Activated CD4-positive, alpha-beta T cell treated with anti-CD3 and anti-CD28 coated beads for 36 hours (primary cell): ENCODE measurements at regions of chr17 and their contacts with region 1.

Region 1: DNA sequence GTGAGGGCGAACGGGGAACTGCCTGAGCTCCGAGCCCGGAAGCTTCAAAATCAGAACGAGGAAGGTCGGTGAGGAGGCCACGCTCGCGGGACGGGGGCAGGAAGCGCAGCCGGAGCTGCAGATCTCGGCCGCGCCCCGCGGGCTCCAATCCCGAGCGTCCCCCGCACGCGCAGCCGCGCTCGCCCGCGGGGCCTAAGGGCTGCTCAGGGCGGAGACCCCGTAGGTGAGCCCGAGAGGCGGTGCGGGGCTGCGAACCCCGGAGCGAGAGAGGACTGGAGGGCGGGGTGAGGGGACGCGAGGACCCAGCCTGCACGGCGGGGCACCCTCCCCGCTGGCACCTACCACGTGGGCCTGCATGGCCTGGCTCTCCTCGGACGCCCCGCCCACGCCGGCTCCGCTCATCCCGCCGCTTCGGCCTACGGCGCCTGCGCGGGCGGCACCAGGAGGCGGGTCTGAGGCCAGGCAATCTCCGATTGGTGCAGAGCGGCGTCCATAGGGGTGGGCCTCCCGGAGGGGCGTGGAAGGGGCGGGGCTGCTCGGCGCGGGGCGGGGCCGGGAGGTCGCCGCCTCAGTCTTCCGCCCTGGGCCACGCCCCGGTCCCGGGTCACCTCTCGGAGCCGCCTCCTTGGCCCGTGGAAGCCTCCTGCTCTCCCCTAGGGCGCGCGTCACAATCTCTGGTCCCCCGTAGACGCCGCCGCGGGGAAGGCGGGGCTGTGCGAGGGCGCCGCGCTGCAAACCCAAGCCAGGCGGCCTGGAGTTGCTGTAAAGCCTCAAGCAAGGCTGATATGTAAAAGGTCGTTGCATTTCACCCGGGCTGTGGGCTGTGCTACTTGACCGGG is 27.8 kb upstream of the METRNL start:
- DNase-seq: peak; percentile 99
- ATAC-seq: peak; percentile 89
- H3K4me3 Mint-ChIP-seq: peak overlapping the region; percentile 85
- H3K27ac Mint-ChIP-seq: peak overlapping the region; percentile 86
- H3K4me1 Mint-ChIP-seq: peaks cover 37% of the 10 kb centered on the region
- H3K27me3 Mint-ChIP-seq: no peaks in the 10 kb centered on the region

Region 2: GRCh38 chr17:82292251-82293154 is 759.1 kb before region 1 on chr17:
- CTCF ChIA-PET with region 1: no interaction called
- POLR2A ChIA-PET with region 1: no interaction called
- intact Hi-C with region 1: loop called in 1 of 2 experiments (anchors 10 kb)
- DNase-seq: peak; percentile 96
- ATAC-seq: peak; percentile 89
- H3K4me3 Mint-ChIP-seq: peak overlapping the region; percentile 78
- H3K27ac Mint-ChIP-seq: peak overlapping the region; percentile 85
- H3K4me1 Mint-ChIP-seq: peaks cover 71% of the 10 kb centered on the region
- H3K27me3 Mint-ChIP-seq: no peaks in the 10 kb centered on the region

Region 3: GRCh38 chr17:82648166-82648668 is 403.4 kb before region 1 on chr17 and contains the start of gene WDR45B:
- CTCF ChIA-PET with region 1: no interaction called
- POLR2A ChIA-PET with region 1: no interaction called
- intact Hi-C with region 1: loop called in 1 of 2 experiments (anchors 1 kb)
- DNase-seq: peak; percentile 95
- ATAC-seq: peak; percentile 88
- H3K4me3 Mint-ChIP-seq: peak within 1 kb of the TSS; percentile 82
- H3K27ac Mint-ChIP-seq: peak within 1 kb of the TSS; percentile 65
- H3K4me1 Mint-ChIP-seq: peaks cover 24% of the 10 kb centered on the region
- H3K27me3 Mint-ChIP-seq: no peaks in the 10 kb centered on the region
- total RNA-seq, gene WDR45B: 74.1 to 74.8 TPM

Region 4: DNA sequence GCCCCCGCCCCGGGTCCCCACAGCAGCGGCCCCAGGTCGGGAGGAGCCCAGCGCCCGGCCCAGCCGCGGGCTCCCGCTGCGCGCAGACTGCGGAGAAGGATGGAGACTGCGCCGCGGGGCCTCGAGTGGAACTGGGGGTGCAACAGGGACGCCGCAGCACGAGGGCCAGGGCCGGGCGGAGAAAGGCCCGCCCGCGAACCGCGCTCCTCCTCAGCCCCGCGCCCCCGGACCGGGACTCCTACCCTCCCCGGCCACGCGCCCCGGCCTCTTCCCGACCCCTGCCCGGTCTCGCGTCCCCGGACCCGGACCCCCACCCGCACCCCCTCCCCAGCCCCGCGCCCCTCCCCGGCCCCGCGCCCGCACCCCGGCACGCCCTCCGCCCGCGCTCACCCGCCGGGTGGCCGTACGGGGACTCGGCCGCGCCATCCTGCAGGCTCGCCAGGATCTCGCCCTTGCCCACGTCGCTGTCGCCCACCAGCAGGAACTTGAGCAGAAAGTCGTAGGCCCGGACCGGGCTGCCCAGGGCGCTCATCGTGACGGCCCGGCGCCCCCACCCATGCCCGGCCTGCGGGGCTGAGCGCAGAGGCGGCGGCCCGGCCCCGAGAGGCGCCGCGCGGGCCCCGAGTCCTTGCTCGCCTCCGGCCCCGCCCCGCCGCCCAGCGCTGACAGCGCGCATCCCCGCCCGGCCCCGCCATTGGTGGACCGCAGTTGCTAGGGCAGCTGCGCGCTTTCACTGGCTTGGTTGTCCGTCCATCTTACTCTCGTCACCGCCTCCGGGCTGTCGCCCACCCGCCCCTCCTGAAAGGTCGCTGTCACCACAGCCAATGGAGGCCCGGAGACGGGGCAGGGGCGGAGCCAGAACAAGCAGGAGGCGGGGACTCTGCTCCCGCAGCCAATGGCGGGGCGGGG is 353.3 kb before region 1 on chr17 and contains the start of gene RAB40B:
- CTCF ChIA-PET with region 1: no interaction called
- POLR2A ChIA-PET with region 1: no interaction called
- intact Hi-C with region 1: loop called in 1 of 2 experiments (anchors 1 kb)
- DNase-seq: peak; percentile 99
- ATAC-seq: peak; percentile 99
- H3K4me3 Mint-ChIP-seq: peak within 1 kb of the TSS; percentile 67
- H3K27ac Mint-ChIP-seq: peak within 1 kb of the TSS; percentile 51
- H3K4me1 Mint-ChIP-seq: peaks cover 10% of the 10 kb centered on the region
- H3K27me3 Mint-ChIP-seq: peaks cover 3% of the 10 kb centered on the region
- total RNA-seq, gene RAB40B: 3.2 to 4.1 TPM

Region 5: DNA sequence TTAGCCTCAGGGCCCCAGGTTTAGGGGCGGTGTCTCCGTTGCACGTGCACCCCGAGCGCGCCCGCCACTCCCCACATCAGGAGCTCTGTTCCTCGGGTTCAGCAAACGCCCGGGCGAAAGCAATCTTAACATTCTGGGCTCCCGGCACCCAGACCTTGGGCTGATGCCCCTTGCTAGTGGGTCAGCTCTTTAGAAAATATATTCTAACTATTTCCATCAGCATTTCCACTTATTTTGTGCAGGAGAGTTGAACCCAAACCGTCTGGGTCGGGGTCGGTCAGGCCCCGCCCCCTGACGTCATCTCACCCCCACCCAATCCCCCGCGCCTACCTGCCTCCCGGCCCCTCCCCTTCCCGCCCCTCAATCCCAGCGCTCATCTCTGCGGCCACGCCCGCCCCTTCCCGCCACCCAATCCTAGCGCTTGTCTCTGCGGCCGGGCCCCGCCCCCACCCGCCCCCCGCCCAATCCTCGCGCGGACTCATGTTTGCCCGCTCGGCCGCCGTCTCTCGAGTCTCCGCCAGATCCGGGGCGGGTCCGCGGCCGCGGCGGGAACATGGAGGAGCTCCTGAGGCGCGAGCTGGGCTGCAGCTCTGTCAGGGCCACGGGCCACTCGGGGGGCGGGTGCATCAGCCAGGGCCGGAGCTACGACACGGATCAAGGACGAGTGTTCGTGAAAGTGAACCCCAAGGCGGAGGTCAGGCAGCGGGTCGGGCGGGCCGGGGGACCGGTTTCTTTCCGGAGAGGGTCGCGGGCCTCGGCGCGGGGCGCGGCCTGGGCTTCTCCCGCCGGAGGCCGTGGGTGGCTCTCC is 335.2 kb before region 1 on chr17 and contains the start of gene FN3KRP:
- CTCF ChIA-PET with region 1: no interaction called
- POLR2A ChIA-PET with region 1: no interaction called
- intact Hi-C with region 1: loop called in 1 of 2 experiments (anchors 1 kb)
- DNase-seq: peak; percentile 95
- ATAC-seq: peak; percentile 91
- H3K4me3 Mint-ChIP-seq: peak within 1 kb of the TSS; percentile 93
- H3K27ac Mint-ChIP-seq: peak within 1 kb of the TSS; percentile 88
- H3K4me1 Mint-ChIP-seq: peaks cover 10% of the 10 kb centered on the region
- H3K27me3 Mint-ChIP-seq: no peaks in the 10 kb centered on the region
- total RNA-seq, gene FN3KRP: 28.3 to 36.3 TPM

Region 6: DNA sequence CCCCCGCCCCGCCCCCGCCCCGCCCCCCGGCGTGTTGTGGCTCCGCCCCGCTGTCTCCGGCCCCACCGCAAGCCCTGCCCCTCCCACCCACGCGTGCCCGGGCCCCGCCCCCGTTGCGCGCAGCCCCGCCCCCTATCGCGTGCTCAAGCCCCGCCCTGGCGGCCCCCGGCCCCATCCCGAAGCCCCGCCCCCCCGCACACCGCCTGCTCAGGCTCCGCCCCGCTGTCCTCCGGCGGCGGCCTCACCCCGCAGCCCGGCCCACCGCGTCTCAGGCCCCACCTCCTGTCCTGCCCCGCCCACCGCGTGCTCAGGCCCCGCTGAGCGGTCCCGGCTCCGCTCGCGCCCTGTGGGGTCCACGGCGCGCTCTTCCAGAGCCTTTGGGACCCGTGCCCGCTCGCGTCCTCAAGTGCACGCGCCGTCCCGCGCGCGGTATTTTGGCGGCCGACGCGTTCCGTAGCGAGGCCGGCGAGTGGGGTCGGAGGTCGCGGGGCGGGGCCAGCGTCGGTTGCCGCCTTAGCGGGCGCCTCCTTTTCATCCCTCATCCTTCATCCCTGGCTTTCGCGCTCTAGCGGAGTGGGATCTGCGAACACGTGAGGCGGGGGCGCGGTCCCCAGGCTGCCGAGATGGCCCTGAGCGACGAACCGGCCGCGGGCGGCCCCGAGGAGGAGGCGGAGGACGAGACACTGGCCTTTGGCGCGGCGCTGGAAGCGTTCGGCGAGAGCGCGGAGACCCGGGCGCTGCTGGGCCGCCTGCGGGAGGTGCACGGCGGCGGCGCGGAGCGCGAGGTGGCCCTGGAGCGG is 299.8 kb before region 1 on chr17 and contains the start of gene TBCD:
- CTCF ChIA-PET with region 1: no interaction called
- POLR2A ChIA-PET with region 1: no interaction called
- intact Hi-C with region 1: loop called in 1 of 2 experiments (anchors 1 kb)
- DNase-seq: peak; percentile 95
- ATAC-seq: peak; percentile 83
- H3K4me3 Mint-ChIP-seq: peak within 1 kb of the TSS; percentile 84
- H3K27ac Mint-ChIP-seq: peak within 1 kb of the TSS; percentile 13
- H3K4me1 Mint-ChIP-seq: peaks cover 26% of the 10 kb centered on the region
- H3K27me3 Mint-ChIP-seq: no peaks in the 10 kb centered on the region
- total RNA-seq, gene TBCD: 83.3 to 97.2 TPM

Region 7: DNA sequence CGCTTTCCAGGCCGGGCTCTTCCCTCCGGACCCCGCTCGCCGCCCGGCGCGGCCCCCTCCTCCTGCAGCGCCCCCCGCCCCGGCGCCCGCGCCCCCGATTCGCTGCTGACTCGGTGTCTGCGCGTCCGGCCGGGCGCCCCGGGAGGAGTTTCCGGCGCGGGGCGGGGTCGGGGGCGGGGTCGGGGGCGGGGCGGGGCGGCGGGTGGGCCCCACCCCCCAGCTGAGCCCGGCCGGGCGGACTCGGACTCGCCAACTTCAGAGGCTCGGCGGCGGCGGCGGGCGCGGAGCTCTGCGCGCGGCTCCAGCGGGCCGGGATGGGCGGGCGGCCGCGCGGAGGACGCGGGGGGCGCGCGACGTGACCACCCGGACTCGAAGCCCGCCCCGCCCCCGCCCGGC is 27.7 kb after region 1 on chr17 and contains the start of gene METRNL:
- CTCF ChIA-PET with region 1: interaction called, 5 read pairs
- POLR2A ChIA-PET with region 1: no interaction called
- intact Hi-C with region 1: loop called in 1 of 2 experiments (anchors 1 kb)
- DNase-seq: peak; percentile 82
- ATAC-seq: peak; percentile 21
- H3K4me3 Mint-ChIP-seq: peak within 1 kb of the TSS; percentile 41
- H3K27ac Mint-ChIP-seq: no peak within 1 kb of the TSS
- H3K4me1 Mint-ChIP-seq: peaks cover 26% of the 10 kb centered on the region
- H3K27me3 Mint-ChIP-seq: peaks cover 7% of the 10 kb centered on the region
- total RNA-seq, gene METRNL: 22.4 to 26.3 TPM

Region 8: DNA sequence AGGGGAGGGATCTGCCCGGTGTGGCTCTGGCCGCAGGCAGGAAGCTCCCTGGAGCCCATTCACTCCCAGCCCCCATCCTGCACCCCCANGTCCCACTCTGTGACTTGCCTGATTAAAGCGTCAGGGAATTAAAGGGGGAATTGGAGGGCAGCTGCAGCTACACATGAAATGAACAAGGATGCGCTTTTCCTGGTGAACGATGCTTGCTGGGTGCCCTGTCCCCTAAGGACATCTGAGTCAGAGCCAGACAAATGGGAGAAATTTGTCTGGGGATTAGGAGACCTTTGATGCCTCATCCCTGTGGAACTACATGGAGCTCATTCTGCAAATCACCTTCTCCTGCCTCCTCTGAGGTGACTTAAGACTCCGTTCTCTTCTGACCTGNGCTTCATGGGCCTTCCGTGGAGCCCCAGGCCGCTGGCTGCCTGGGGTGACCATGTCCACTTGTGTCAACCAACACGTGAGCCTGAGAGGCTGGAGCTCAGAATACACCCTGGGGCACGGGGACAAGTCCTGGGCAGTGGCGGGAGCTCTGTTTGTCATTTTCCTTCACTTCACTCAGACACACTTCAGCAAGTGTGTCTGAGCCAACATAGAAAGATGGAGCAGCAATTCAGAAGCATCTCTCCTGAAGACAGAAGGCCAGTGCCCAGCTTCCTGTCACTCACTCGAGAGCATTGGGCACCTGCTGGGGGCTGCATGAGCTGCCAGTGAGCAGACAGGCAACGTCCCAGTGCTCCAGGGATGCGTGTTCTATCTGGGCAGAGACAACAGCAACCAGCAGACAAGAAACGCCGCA is 81.9 kb after region 1 on chr17:
- CTCF ChIA-PET with region 1: no interaction called
- POLR2A ChIA-PET with region 1: no interaction called
- intact Hi-C with region 1: no loop called
- DNase-seq: no peak
- ATAC-seq: no peak
- H3K4me3 Mint-ChIP-seq: no peak overlapping the region
- H3K27ac Mint-ChIP-seq: no peak overlapping the region
- H3K4me1 Mint-ChIP-seq: no peaks in the 10 kb centered on the region
- H3K27me3 Mint-ChIP-seq: peaks cover 4% of the 10 kb centered on the region